ENCODE measurements at regions of chr12 and their contacts with region 1.

Region 1: GRCh38 chr12:67355578-67356379 is 86.6 kb downstream of the CAND1 start:
- DNase-seq: no peak
- ATAC-seq: peak; percentile 81 to 91 (median 88)
- H3K4me3 ChIP-seq: no peak overlapping the region
- H3K27ac ChIP-seq: peak overlapping the region in 2 of 3 donors; percentile 30 to 39
- H3K4me1 ChIP-seq: peaks cover 0 to 8% (median 0%) of the 10 kb centered on the region in 4 donors
- H3K27me3 ChIP-seq: no peaks in the 10 kb centered on the region
- CTCF ChIP-seq: peak; percentile 46 to 55 (median 50)
- POLR2A ChIP-seq: no peak

Region 2: GRCh38 chr12:67280572-67280971 is 75.2 kb before region 1 on chr12:
- intact Hi-C with region 1: no loop called
- DNase-seq: no peak
- ATAC-seq: no peak
- H3K4me3 ChIP-seq: no peak overlapping the region
- H3K27ac ChIP-seq: no peak overlapping the region
- H3K4me1 ChIP-seq: peaks cover 0 to 20% (median under 1%) of the 10 kb centered on the region in 4 donors
- H3K27me3 ChIP-seq: no peaks in the 10 kb centered on the region
- CTCF ChIP-seq: no peak
- POLR2A ChIP-seq: no peak

Region 3: DNA sequence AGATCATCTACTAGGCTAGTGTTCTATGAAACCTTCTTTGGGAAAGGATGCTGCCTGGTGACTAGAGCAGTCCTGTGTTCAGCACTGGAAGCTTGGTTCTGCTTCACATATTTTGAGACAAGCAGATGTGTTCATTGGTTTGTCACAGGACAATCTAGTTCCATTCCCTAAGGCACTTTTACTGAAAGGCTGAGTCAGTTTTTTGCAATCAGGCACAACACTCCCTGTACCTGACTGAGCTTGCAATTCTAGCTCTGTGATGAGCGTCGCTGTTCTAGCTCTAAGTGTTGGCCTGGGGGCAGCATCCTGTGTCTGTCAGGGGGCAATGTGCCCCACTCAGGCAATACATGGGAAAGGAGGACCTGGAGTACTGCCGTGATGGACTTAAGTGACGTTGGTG is 57.8 kb after region 1 on chr12:
- intact Hi-C with region 1: loop called in 1 of 2 experiments (anchors 5 kb)
- DNase-seq: no peak
- ATAC-seq: no peak
- H3K4me3 ChIP-seq: no peak overlapping the region
- H3K27ac ChIP-seq: no peak overlapping the region
- H3K4me1 ChIP-seq: peaks cover 0 to 19% (median 5%) of the 10 kb centered on the region in 4 donors
- H3K27me3 ChIP-seq: no peaks in the 10 kb centered on the region
- CTCF ChIP-seq: no peak
- POLR2A ChIP-seq: no peak

Region 4: DNA sequence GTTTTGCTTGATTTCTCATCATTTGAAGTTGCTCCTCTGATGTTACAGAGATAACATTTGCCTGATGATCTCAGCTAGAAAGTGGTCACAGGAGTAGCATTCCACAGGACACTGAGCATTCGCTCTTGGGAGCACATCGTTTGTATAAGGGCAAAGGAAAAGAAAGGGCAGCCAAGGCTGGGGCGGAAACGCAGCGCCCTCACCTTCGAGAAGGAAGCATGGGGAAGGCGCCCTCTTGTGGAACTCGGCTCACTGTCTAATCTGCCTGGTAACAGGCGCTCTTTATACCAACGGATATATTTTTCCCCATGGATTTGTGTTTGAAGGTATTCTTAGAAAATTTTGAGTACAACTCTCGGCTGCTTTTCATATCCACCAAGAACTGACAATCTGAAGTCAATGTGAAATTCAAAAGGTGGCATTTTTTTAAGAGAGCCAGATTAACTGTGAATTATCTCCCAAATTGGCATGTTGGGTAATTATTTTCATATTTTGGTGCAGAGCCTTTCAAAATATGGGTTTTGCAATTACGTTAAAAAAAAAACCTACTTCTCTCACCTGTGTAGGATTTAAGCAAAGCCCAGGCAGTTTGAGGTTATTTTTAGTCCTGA is 86.1 kb after region 1 on chr12:
- intact Hi-C with region 1: loop called in 1 of 2 experiments (anchors 10 kb)
- DNase-seq: peak; percentile 86 to 92 (median 88)
- ATAC-seq: peak; percentile 99 to 100 (median 99)
- H3K4me3 ChIP-seq: peak overlapping the region in 2 of 3 donors; percentile 24 to 29
- H3K27ac ChIP-seq: no peak overlapping the region
- H3K4me1 ChIP-seq: peaks cover 0 to 6% (median 0%) of the 10 kb centered on the region in 4 donors
- H3K27me3 ChIP-seq: no peaks in the 10 kb centered on the region
- CTCF ChIP-seq: peak; percentile 70 to 87 (median 84)
- POLR2A ChIP-seq: no peak

Region 5: GRCh38 chr12:67943226-67943892 is 587.6 kb after region 1 on chr12:
- intact Hi-C with region 1: loop called (anchors 10 kb)
- DNase-seq: peak in 1 of 3 donors; percentile 58
- ATAC-seq: peak; percentile 87 to 95 (median 91)
- H3K4me3 ChIP-seq: no peak overlapping the region
- H3K27ac ChIP-seq: no peak overlapping the region
- H3K4me1 ChIP-seq: no peaks in the 10 kb centered on the region
- H3K27me3 ChIP-seq: no peaks in the 10 kb centered on the region
- CTCF ChIP-seq: peak; percentile 67 to 79 (median 71)
- POLR2A ChIP-seq: no peak

Measured in right lobe of liver (tissue), 6 donors.